ENCODE measurements at regions of chr1 and their contacts with region 1.

Region 1: DNA sequence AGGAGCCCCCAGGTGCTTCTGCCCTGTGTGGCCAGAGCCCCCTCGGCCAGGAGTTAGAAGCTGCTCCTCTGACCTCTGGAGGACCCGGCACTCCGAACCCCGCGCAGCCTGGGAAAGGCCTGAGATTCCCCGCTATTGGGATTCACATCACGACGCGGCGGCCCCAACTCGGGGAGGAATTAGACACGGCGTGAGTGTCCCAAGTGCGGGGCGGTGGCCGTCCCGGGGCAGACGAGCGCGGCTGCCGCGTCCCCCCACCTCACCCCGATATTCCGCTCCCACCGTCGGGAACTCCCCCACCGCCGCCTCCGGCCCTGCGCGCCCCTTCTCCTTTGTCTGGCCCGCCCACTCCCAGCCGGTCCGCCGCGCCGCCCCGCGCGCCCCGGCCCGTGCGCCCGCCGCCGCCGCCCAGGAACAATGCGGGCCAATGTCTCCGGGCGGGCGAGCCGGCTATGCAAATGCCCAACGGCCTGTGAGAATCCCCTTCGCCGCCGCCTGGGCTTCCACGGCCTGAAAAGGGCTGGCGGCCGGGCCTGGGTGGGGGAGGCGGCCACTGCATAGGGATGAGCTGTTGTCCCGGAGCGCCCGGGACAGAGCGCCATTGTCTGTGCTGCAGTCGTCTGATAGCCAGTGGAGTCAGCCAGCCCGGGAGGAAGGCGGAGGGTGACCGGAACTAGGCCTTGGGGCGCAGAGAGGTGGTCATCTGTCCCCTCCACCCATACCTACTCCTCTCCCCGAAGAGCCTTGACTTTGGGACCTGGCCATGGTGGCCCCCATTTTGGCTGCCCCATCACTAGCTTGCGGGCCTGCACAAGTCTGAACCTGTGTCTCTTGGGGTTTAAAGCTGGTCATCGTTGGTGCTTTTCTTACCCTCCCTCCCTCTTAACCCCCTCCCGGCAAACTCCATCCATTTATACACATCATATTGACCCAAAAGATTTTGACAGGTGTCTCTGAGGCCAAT is 19.4 kb downstream of the RHBG start:
- DNase-seq: peak; percentile 83 to 99 (median 90)

Region 2: DNA sequence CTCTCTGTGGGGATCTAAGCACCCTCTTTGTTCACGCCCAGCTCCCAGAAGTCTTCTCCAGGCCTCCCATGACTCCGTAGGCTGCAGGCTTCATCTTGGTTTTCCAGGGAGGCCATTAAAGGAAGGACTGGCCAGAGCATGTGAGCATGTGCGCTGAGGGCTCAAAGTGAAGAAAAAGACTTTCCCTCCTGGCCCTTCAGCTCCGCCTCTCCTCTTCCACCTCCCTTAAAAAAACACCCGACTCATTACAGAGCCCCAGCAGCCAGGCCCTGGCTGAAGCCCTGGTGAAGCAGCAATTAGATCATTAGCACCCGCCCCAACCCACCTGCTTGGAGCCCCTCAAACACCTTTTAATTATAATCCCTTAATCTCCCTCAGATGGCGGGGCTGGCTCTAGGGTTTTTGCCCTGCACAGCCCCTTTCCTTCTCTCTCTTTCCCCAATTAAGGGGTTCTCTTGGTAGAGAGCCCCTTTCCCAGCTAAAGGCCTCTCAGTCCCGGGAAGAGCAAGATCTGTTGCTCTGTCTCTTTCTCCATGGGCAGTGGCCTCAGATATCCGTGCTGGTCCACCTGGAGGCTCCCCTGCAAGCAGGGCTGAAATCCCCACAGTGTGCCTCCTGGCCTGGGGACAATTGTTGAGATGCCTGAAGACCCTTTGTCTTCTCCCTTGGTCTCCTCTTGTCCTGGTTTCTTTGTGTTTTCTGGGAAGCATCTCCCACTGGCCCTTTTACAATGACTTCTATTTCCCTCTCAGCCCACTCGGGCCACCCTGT is 11.1 kb after region 1 on chr1:
- intact Hi-C with region 1: loop called (anchors 1 kb)
- DNase-seq: no peak

Region 3: GRCh38 chr1:156413391-156414246 is 25.2 kb after region 1 on chr1:
- intact Hi-C with region 1: loop called (anchors 1 kb)
- DNase-seq: peak; percentile 77 to 98 (median 86)

Region 4: DNA sequence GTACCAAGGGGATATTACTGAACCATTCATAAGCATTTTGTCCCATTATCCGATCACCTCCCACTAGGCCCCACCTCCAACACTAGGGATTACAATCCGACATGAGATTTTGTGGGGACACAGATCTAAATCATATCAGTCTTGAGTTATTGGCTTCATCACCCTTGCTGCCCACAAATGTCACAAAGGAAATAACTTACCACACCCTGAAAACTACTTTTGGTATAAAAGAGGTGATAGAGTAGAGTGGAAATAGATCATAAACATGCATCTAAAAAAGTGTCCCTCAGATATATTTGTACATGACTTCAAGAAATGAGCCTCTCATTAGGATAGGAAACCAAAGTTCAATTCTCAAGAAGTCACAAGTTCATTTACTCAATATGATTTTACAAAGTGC is 1334.7 kb after region 1 on chr1:
- intact Hi-C with region 1: no loop called
- DNase-seq: no peak

Measured in posterior cingulate gyrus (tissue), 11 donors.